ENCODE measurements at regions of chr2 and their contacts with region 1.

Region 1: DNA sequence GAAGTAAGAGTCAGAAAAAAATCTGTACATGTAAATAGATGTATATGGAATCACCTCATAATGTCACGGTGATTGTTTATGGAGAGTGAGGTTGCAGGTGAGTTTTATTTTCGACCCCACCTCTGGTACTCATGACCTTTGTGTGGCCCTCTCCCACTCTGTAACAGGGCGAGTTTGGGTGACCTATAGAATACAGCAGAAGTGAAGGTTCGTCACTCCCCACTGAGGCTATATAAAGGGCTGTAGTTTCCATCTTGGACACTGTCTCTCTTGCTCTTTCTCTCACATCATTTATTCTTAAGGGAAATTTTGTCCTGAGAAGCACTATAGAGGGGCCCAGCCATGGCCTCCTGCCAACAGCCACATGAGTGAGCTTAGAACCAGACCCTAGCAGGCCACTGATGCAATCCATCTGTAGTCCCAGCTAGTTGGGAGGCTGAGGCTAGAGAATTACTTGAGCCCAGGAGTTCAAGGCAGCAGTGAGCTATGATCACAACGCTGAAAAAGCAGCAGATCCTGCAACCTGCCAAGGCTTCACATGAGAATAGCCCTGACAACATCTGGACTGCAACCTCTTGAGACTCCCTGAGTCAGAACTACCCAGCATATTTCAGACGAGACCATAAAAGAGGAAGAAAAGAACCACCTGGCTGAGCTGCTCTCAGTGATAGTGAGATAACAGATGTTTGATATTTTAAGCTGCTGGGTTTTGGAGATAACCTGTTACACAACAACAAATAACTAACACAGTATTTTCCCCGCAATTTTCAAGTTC is 74.3 kb upstream of the SLC1A4 start:
- DNase-seq: peak; percentile 96
- ATAC-seq: peak; percentile 68
- H3K4me3 ChIP-seq: peak overlapping the region; percentile 41
- H3K27ac ChIP-seq: peak overlapping the region; percentile 81
- H3K4me1 ChIP-seq: peaks cover 62% of the 10 kb centered on the region
- H3K27me3 ChIP-seq: no peaks in the 10 kb centered on the region
- CTCF ChIP-seq: no peak
- EP300 ChIP-seq: peak; percentile 73 to 80; a peak in 3 of 4 replicates
- POLR2A ChIP-seq: peak; percentile 72
- RAD21 ChIP-seq: no peak

Region 2: GRCh38 chr2:64932371-64933216 is 17.7 kb after region 1 on chr2:
- CTCF ChIA-PET with region 1: interaction called, 413 read pairs
- POLR2A ChIA-PET with region 1: interaction called, 377 read pairs
- RAD21 ChIA-PET with region 1: interaction called, 389 read pairs
- SMC1A ChIA-PET with region 1: interaction called, 395 read pairs
- in situ Hi-C with region 1: no loop called
- intact Hi-C with region 1: loop called (anchors 1 kb)
- DNase-seq: peak; percentile 98
- ATAC-seq: peak; percentile 81
- H3K4me3 ChIP-seq: peak overlapping the region; percentile 96
- H3K27ac ChIP-seq: peak overlapping the region; percentile 95
- H3K4me1 ChIP-seq: peaks cover 28% of the 10 kb centered on the region
- H3K27me3 ChIP-seq: no peaks in the 10 kb centered on the region
- CTCF ChIP-seq: no peak
- EP300 ChIP-seq: peak; percentile 62 to 83; a peak in 3 of 4 replicates
- POLR2A ChIP-seq: peak; percentile 84
- RAD21 ChIP-seq: 0 out of 2 replicates have a peak, but pooled peaks have one; percentile 1

Region 3: GRCh38 chr2:64978514-64979268 is 63.8 kb after region 1 on chr2:
- CTCF ChIA-PET with region 1: interaction called, 7 read pairs
- POLR2A ChIA-PET with region 1: interaction called, 3 read pairs
- RAD21 ChIA-PET with region 1: interaction called, 11 read pairs
- SMC1A ChIA-PET with region 1: interaction called, 9 read pairs
- in situ Hi-C with region 1: no loop called
- intact Hi-C with region 1: no loop called
- DNase-seq: no peak
- ATAC-seq: peak; percentile 71
- H3K4me3 ChIP-seq: no peak overlapping the region
- H3K27ac ChIP-seq: no peak overlapping the region
- H3K4me1 ChIP-seq: peaks cover 25% of the 10 kb centered on the region
- H3K27me3 ChIP-seq: no peaks in the 10 kb centered on the region
- CTCF ChIP-seq: peak; percentile 29 to 36 (median 31); a peak in 4 of 6 replicates
- EP300 ChIP-seq: no peak
- POLR2A ChIP-seq: no peak
- RAD21 ChIP-seq: peak; percentile 36

Region 4: GRCh38 chr2:65031341-65032018 is 116.6 kb after region 1 on chr2:
- CTCF ChIA-PET with region 1: interaction called, 119 read pairs
- POLR2A ChIA-PET with region 1: interaction called, 45 read pairs
- RAD21 ChIA-PET with region 1: interaction called, 95 read pairs
- SMC1A ChIA-PET with region 1: interaction called, 178 read pairs
- in situ Hi-C with region 1: loop called (anchors 5 kb)
- intact Hi-C with region 1: loop called (anchors 1 kb)
- DNase-seq: no peak
- ATAC-seq: peak; percentile 41
- H3K4me3 ChIP-seq: peak overlapping the region; percentile 46
- H3K27ac ChIP-seq: peak overlapping the region; percentile 73
- H3K4me1 ChIP-seq: peaks cover 51% of the 10 kb centered on the region
- H3K27me3 ChIP-seq: no peaks in the 10 kb centered on the region
- CTCF ChIP-seq: no peak
- EP300 ChIP-seq: no peak
- POLR2A ChIP-seq: no peak
- RAD21 ChIP-seq: no peak

Region 5: DNA sequence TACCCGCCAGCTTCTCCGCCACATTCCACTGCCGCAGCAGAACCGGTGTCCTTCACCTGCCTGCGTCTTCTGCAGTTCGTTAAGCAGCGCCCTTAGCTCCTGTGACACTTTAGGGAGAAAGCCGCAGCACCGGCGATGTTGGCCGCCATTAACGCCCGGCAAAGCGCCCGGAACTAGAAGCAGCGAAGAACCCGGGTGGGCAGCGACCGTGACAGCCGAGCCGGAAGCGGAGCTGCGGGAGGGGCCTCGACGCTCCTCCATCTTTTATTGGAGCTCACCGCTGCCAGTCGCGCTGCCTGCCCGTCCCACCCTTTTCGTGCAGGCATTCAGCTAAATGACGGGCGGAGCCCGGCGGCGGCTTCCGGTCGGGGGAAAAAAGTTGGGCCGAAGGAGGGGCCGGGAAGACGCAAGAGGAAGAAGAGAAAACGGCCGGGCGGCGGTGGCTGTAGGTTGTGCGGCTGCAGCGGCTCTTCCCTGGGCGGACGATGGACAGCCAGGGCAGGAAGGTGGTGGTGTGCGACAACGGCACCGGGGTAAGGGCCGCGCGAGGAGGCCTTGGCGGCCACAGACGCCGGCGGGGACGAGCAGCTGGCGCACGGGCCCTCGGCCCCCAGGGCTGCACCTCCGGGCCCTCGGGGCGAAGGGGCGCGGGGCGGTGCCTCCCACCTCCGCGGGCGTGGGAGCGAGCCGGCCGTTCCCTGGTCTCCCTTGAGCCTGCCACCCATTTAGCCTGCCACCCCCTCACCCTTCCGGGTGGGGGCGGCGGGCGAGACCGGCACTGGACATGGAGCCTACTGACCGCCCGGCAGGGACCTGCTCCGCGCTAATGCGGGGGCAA is 312.7 kb after region 1 on chr2 and contains the start of gene ACTR2:
- CTCF ChIA-PET with region 1: no interaction called
- POLR2A ChIA-PET with region 1: interaction called, 5 read pairs
- RAD21 ChIA-PET with region 1: no interaction called
- SMC1A ChIA-PET with region 1: no interaction called
- in situ Hi-C with region 1: no loop called
- intact Hi-C with region 1: loop called (anchors 10 kb)
- DNase-seq: peak; percentile 90
- ATAC-seq: peak; percentile 92
- H3K4me3 ChIP-seq: peak within 1 kb of the TSS; percentile 97
- H3K27ac ChIP-seq: peak within 1 kb of the TSS; percentile 98
- H3K4me1 ChIP-seq: peaks cover 12% of the 10 kb centered on the region
- H3K27me3 ChIP-seq: no peaks in the 10 kb centered on the region
- CTCF ChIP-seq: no peak
- EP300 ChIP-seq: 0 out of 4 replicates have a peak, but pooled peaks of 1 of the 2 experiments have one; percentile 22
- POLR2A ChIP-seq: peak; percentile 98
- RAD21 ChIP-seq: no peak
- polyA plus RNA-seq, gene ACTR2: 94.2 to 124 TPM